Gastrocnemius medialis (tissue), 4 donors: ENCODE measurements at regions of chr4 and their contacts with region 1.

Region 1: GRCh38 chr4:99117876-99118693 is 26.0 kb downstream of the ADH4 start:
- DNase-seq: no peak
- ATAC-seq: no peak
- H3K4me3 ChIP-seq: no peak overlapping the region
- H3K27ac ChIP-seq: no peak overlapping the region
- H3K4me1 ChIP-seq: no peaks in the 10 kb centered on the region
- H3K27me3 ChIP-seq: no peaks in the 10 kb centered on the region
- CTCF ChIP-seq: peak in 4 of 5 experiments; percentile 15 to 53 (median 40)
- POLR2A ChIP-seq: no peak

Region 2: GRCh38 chr4:99405433-99406115 is 287.5 kb after region 1 on chr4:
- in situ Hi-C with region 1: loop called (anchors 5 to 10 kb)
- intact Hi-C with region 1: loop called (anchors 1 kb)
- DNase-seq: peak; percentile 37 to 55
- ATAC-seq: peak; percentile 74 to 84
- H3K4me3 ChIP-seq: no peak overlapping the region
- H3K27ac ChIP-seq: peak overlapping the region; percentile 56 to 71 (median 63)
- H3K4me1 ChIP-seq: peaks cover 0 to 23% of the 10 kb centered on the region in 2 donors
- H3K27me3 ChIP-seq: no peaks in the 10 kb centered on the region
- CTCF ChIP-seq: peak; percentile 94 to 96 (median 95)
- POLR2A ChIP-seq: no peak

Region 3: DNA sequence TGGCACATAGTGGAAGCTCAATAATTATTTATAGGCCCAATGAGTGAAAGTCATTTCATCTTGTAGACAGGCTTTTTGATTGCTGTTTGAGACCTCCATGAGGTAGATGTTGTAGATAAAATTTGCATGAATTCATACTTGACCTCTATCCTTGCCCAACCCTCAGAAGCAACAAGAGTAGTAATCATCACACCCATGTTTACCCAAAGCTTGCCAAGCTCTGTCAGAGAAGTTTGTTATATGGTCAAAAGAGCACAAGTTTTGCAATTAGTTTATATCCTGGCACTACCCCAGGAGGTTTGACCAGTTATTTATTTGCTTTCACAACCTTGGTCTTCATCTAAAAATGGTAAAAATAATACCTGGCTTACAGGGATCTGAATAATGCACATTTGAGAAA is 296.3 kb after region 1 on chr4:
- in situ Hi-C with region 1: loop called in 1 of 4 experiments (anchors 10 kb)
- intact Hi-C with region 1: no loop called
- DNase-seq: no peak
- ATAC-seq: no peak
- H3K4me3 ChIP-seq: no peak overlapping the region
- H3K27ac ChIP-seq: no peak overlapping the region
- H3K4me1 ChIP-seq: no peaks in the 10 kb centered on the region
- H3K27me3 ChIP-seq: no peaks in the 10 kb centered on the region
- CTCF ChIP-seq: no peak
- POLR2A ChIP-seq: no peak

Region 4: GRCh38 chr4:99462875-99463464 is 344.9 kb after region 1 on chr4:
- in situ Hi-C with region 1: no loop called
- intact Hi-C with region 1: loop called (anchors 1 kb)
- DNase-seq: peak; percentile 19 to 42
- ATAC-seq: peak; percentile 70 to 82
- H3K4me3 ChIP-seq: no peak overlapping the region
- H3K27ac ChIP-seq: no peak overlapping the region
- H3K4me1 ChIP-seq: no peaks in the 10 kb centered on the region
- H3K27me3 ChIP-seq: no peaks in the 10 kb centered on the region
- CTCF ChIP-seq: peak; percentile 52 to 75 (median 66)
- POLR2A ChIP-seq: no peak